CD4-positive, alpha-beta T cell (primary cell): ENCODE measurements at regions of chr1 and their contacts with region 1.

Region 1: DNA sequence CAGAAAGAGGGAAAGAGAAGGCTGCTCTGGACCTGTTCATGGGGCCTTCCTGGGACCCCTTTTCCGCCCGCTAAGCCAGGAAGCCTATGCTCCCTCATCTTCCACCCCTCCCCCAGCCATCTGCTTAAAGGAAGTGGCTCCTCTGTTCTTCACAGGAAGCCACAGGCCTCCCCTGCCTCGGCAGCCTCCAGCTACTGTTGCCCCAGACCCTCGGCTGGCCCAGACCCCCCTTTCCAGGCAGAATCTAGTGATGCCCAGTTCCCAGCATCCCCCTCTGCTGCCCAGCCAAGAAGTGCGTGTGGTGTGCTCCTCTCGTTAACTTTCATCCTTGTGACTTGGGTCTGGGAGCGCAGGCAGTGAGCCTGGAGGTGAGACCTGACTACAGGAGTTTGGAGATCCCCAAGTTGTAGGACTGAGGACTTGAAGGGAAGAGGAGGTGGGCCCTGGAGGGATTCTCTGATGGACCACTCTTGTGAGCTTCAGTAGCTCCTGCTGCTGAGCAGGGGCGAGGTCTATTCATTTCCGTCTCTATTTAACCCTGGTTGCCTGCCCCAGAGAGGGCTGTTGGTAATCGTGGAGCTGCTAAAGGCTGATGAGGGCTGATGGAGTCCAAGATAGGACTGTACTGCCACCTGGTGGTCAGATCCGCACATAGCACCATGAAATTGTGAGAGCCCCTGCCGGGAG is 9.1 kb downstream of the IFI6 start:
- DNase-seq: peak; percentile 81 to 95 (median 90)
- ATAC-seq: peak; percentile 75
- H3K4me3 ChIP-seq: peak overlapping the region; percentile 44
- H3K4me3 Mint-ChIP-seq: peak overlapping the region; percentile 68
- H3K27ac ChIP-seq: peak overlapping the region; percentile 91 to 92
- H3K27ac Mint-ChIP-seq: peak overlapping the region; percentile 88
- H3K4me1 ChIP-seq: peaks cover 49% of the 10 kb centered on the region
- H3K4me1 Mint-ChIP-seq: peaks cover 48% of the 10 kb centered on the region
- H3K27me3 ChIP-seq: no peaks in the 10 kb centered on the region
- H3K27me3 Mint-ChIP-seq: no peaks in the 10 kb centered on the region
- CTCF ChIP-seq: peak; percentile 80

Region 2: DNA sequence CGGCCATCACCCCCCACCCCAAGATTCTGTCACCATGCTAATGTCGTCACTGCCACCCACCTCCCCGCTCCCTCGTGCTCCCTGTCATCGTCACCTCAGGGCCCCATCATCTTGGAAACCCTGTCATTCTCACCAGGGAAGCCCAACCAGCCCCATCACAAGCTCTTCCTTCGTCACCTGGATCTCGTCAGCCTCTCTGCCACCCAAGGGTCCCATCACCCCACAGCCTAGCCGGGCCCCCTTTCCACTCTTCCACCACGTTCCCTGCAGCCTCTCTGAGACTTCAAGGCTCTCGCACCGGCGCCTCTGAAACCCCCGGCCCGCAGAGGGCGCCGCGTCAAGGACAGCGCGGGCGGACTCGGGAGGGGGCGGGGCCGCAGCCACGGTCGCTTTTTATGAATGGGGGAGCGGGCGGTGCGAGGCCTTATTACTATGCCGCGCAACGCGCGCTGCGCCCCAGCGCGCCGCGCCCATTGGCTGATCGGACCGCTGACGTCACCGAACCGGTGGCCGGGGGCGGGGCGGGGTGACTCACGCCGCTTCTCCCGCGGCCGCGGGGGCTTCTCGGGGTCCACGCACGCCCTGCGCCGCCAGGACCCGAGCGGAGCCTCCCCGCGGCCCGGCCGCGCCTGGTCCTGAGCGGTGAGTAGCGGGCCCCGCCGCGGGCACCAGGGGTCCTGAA is 270.6 kb before region 1 on chr1 and contains the start of gene GPR3:
- CTCF ChIA-PET with region 1: interaction called, 6 read pairs
- POLR2A ChIA-PET with region 1: no interaction called
- intact Hi-C with region 1: loop called (anchors 1 to 2 kb)
- DNase-seq: peak; percentile 88 to 97 (median 92)
- ATAC-seq: peak; percentile 89
- H3K4me3 ChIP-seq: peak within 1 kb of the TSS; percentile 45
- H3K4me3 Mint-ChIP-seq: peak within 1 kb of the TSS; percentile 77
- H3K27ac ChIP-seq: no peak within 1 kb of the TSS
- H3K27ac Mint-ChIP-seq: peak within 1 kb of the TSS; percentile 57
- H3K4me1 ChIP-seq: peaks cover 36% of the 10 kb centered on the region
- H3K4me1 Mint-ChIP-seq: peaks cover 26% of the 10 kb centered on the region
- H3K27me3 ChIP-seq: no peaks in the 10 kb centered on the region
- H3K27me3 Mint-ChIP-seq: peaks cover 3% of the 10 kb centered on the region
- CTCF ChIP-seq: peak; percentile 71
- total RNA-seq, gene GPR3: 0.14 to 0.19 TPM

Region 3: DNA sequence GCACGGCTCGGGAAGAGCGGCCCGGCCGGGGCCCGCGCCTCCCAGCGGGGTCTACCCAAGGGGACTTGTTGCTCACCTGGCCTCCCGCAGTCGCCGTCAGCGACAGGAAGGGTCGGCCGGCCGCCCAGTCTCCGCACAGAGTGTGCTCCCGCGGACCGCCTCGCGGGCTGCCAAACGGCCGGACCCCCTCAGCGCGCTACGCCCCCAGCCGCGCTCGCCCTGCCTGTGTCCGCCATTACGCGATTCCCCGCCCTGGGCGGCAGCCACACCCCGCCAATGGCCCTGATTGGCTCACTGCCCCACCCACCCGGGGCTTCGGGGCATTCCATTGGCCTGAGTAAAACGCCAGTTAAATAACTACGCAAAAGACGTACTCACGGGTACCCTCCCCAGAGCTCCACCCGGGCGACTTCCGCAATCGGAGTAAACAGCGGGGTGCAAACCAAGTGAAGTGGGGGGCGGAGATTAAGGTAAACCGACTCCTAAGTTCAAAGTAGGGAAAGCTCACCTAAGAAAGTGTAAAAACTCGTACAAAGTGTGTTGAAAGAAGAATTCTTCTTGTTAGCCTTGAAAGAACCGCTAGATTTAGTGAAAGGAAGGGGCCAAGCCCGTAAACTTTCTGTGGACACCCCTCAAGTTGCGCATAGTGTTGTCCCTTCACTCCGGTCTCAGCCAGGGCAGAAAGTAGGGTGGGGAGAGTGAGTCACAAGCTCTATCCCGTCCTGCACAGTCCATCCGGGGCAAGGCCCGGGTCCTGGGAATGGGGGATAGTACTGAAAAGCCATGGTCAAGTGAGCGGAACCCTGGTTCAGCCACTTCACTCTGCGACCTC is 172.7 kb before region 1 on chr1 and contains the start of gene WASF2:
- CTCF ChIA-PET with region 1: no interaction called
- POLR2A ChIA-PET with region 1: interaction called, 10 read pairs
- intact Hi-C with region 1: no loop called
- DNase-seq: peak; percentile 93 to 98 (median 95)
- ATAC-seq: peak; percentile 95
- H3K4me3 ChIP-seq: peak within 1 kb of the TSS; percentile 100
- H3K4me3 Mint-ChIP-seq: peak within 1 kb of the TSS; percentile 100
- H3K27ac ChIP-seq: peak within 1 kb of the TSS; percentile 73 to 98
- H3K27ac Mint-ChIP-seq: peak within 1 kb of the TSS; percentile 100
- H3K4me1 ChIP-seq: peaks cover 28% of the 10 kb centered on the region
- H3K4me1 Mint-ChIP-seq: peaks cover 29% of the 10 kb centered on the region
- H3K27me3 ChIP-seq: no peaks in the 10 kb centered on the region
- H3K27me3 Mint-ChIP-seq: no peaks in the 10 kb centered on the region
- CTCF ChIP-seq: no peak
- total RNA-seq, gene WASF2: 119 to 121 TPM

Region 4: DNA sequence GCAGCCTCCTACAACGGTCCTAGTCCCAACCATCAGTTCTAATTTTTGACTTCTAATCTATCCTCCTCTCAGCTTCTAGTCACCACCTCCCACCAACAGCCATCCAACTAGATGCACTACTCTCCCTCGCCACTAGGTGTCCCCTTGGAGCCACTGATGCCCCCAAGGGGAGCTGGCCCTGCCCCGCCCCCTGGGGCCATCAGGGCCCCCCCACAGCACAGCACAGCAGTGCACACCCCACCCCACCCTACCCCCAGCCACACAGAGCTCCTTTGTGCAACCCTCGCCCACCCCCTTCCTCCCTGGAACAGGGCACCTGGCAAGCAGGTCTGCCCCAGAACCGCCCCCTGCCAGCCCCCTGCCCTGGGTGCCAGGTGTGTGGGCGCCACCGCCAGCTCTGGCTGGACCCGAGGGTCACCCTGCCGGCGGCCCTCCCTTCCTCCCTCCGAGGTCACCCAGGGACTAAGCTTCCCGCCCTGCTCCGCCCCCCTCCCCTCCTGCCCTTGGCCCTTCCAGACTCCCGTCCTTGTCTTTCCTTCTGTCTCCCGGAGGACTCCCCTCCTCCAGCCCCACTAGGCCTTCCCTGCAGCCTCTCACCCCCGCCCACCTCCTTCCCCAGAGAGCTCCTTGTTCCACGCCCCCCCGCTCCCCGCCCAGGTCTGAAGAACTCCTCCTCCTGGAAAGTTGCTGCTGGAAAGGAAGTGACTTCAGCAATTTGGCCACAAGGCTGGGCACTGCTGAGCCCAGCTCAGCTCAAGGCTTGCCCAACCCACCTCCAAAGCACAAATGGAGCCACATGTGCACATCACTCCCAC is 105.9 kb before region 1 on chr1:
- CTCF ChIA-PET with region 1: interaction called, 13 read pairs
- POLR2A ChIA-PET with region 1: interaction called, 8 read pairs
- intact Hi-C with region 1: loop called (anchors 2 kb)
- DNase-seq: peak; percentile 60 to 86 (median 65)
- ATAC-seq: peak; percentile 90
- H3K4me3 ChIP-seq: no peak overlapping the region
- H3K4me3 Mint-ChIP-seq: peak overlapping the region; percentile 23
- H3K27ac ChIP-seq: no peak overlapping the region
- H3K27ac Mint-ChIP-seq: peak overlapping the region; percentile 50
- H3K4me1 ChIP-seq: peaks cover 28% of the 10 kb centered on the region
- H3K4me1 Mint-ChIP-seq: peaks cover 39% of the 10 kb centered on the region
- H3K27me3 ChIP-seq: no peaks in the 10 kb centered on the region
- H3K27me3 Mint-ChIP-seq: no peaks in the 10 kb centered on the region
- CTCF ChIP-seq: peak; percentile 94

Region 5: DNA sequence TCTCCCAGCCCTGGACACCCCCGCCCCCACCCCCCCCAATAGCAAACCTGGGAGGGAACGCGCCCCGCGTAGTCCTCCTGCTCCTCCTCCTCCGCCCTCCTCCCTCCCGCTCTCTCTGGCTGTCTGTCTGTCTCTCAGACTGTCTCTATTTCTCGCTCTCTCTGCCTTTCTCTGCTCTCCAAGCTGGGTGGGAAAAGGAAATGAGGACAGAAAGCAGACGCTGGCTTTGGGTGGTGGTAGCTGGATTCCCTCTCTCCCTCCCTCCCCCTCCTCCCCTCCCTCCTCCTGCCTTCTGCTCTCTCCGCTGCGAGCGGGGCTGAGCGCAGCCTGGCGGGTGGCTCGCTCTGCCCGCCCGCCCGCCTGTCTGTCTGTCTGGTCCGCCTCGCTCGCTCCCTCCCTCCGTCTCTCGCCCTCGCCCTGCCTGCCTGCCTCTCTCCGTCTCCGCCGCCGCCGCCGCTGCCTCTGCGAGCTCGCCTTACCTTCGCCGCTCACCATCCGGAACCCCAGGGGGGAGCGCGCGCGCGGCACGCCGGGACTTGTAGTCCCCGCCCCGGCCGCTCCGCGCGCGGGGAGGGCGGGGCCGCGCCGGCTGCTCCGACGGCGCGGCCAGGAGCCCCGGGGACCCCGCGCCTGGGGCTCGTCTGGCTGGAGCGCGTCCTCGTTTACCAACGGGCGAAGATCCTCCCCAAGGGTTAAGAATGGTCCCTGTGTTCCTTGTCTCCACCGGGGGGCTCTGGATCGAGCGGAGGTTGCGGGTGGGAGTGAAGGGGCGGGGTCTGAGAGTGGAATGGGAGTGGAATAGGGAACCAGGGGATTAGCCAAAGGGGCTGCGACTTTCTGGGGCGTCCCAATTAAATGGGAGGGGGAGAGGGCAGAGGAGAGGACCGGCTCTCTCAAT is 58.9 kb before region 1 on chr1 and contains the start of gene AHDC1:
- CTCF ChIA-PET with region 1: interaction called, 55 read pairs
- POLR2A ChIA-PET with region 1: interaction called, 98 read pairs
- intact Hi-C with region 1: loop called (anchors 1 kb)
- DNase-seq: peak; percentile 86 to 96 (median 90)
- ATAC-seq: peak; percentile 84
- H3K4me3 ChIP-seq: peak within 1 kb of the TSS; percentile 78
- H3K4me3 Mint-ChIP-seq: peak within 1 kb of the TSS; percentile 99
- H3K27ac ChIP-seq: peak within 1 kb of the TSS in 1 of 2 donors; percentile 67
- H3K27ac Mint-ChIP-seq: peak within 1 kb of the TSS; percentile 87
- H3K4me1 ChIP-seq: peaks cover 72% of the 10 kb centered on the region
- H3K4me1 Mint-ChIP-seq: peaks cover 54% of the 10 kb centered on the region
- H3K27me3 ChIP-seq: no peaks in the 10 kb centered on the region
- H3K27me3 Mint-ChIP-seq: no peaks in the 10 kb centered on the region
- CTCF ChIP-seq: no peak
- total RNA-seq, gene AHDC1: 20.8 to 22.9 TPM

Region 6: DNA sequence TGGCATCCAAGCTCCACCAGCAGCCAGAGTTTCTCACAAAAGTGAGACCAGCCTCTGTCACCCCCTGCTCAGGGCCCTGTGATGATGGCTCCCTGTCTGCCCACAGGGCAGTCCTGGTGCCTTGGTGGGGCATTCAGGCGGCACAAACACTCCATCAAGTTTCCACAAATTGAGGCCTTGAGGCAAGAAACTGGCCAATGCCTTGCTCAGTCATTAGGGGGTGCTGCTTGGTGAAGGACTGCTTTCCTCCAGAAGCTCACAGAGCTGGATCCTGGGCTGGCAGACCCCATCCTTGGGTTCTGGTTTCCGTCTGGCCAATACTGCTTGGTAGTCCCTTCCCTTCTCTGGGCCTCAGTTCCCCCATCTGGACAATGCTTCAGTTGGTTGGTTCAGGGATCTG is 46.4 kb before region 1 on chr1:
- CTCF ChIA-PET with region 1: interaction called, 55 read pairs
- POLR2A ChIA-PET with region 1: interaction called, 98 read pairs
- intact Hi-C with region 1: loop called in 1 of 2 experiments (anchors 2 kb)
- DNase-seq: peak in 1 of 14 experiments; percentile 15
- ATAC-seq: no peak
- H3K4me3 ChIP-seq: no peak overlapping the region
- H3K4me3 Mint-ChIP-seq: no peak overlapping the region
- H3K27ac ChIP-seq: peak overlapping the region; percentile 15 to 77
- H3K27ac Mint-ChIP-seq: peak overlapping the region; percentile 80
- H3K4me1 ChIP-seq: peaks cover 73% of the 10 kb centered on the region
- H3K4me1 Mint-ChIP-seq: peaks cover 75% of the 10 kb centered on the region
- H3K27me3 ChIP-seq: no peaks in the 10 kb centered on the region
- H3K27me3 Mint-ChIP-seq: no peaks in the 10 kb centered on the region
- CTCF ChIP-seq: no peak

Region 7: GRCh38 chr1:27725374-27726173 is 62.7 kb after region 1 on chr1 and contains the start of gene FAM76A:
- CTCF ChIA-PET with region 1: interaction called, 3 read pairs
- POLR2A ChIA-PET with region 1: interaction called, 16 read pairs
- intact Hi-C with region 1: loop called in 1 of 2 experiments (anchors 2 kb)
- DNase-seq: peak; percentile 99 to 100 (median 99)
- ATAC-seq: peak; percentile 92
- H3K4me3 ChIP-seq: peak within 1 kb of the TSS; percentile 74
- H3K4me3 Mint-ChIP-seq: peak within 1 kb of the TSS; percentile 85
- H3K27ac ChIP-seq: peak within 1 kb of the TSS; percentile 82 to 85
- H3K27ac Mint-ChIP-seq: peak within 1 kb of the TSS; percentile 89
- H3K4me1 ChIP-seq: peaks cover 19% of the 10 kb centered on the region
- H3K4me1 Mint-ChIP-seq: peaks cover 24% of the 10 kb centered on the region
- H3K27me3 ChIP-seq: no peaks in the 10 kb centered on the region
- H3K27me3 Mint-ChIP-seq: no peaks in the 10 kb centered on the region
- CTCF ChIP-seq: peak; percentile 60
- total RNA-seq, gene FAM76A: 26.0 to 28.7 TPM